GM12878 (cell line): ENCODE measurements at regions of chr1 and their contacts with region 1.

Region 1: DNA sequence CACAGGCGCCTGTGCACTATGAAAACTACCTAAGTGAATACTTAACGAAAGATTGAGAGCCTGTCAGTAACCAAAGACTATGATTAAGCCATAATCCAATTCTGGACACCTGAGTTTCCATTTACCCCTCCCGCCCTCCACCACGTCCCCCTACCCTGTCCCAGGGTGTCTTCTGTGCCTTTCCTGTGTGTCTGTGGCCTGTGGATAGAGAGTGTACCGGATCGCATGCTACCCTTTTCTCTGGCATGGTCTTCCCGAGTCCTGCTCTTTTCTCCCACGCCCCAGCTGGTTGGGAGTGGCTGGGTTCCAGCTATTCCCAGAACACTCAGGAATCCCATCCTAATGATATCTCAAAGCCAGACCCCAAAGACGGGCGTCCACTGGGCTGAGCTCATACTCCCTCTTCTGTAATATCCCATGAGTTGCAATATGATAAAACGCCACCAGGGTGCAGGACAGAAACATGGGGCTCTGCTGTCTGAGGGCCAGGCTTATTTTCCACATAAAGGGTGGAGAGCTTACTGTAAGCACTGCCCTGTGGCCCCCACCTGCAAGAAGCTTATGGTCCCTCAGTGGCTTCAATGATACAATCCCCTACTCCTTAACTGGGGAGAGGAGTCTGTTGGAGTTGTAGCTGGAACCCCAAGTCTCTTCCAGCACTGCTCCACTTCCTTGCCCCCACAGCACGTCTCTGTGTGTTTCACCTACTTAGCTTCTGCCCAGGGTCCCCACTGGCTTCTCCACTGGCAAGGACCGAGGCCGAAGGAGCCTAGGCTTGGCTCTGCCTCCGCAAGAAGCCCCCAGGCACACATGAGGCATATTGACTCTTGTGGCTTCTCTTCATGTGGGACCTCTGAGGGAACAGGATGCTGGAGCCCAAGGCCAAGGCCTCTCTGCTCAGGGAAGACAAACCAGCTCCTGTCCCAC is 17.6 kb upstream of the ALX3 start:
- DNase-seq: no peak
- ATAC-seq: peak; percentile 89
- H3K4me3 ChIP-seq: no peak overlapping the region
- H3K27ac ChIP-seq: no peak overlapping the region
- H3K4me1 ChIP-seq: peaks cover 5% of the 10 kb centered on the region; the same call in 1 of the 2 replicates
- H3K27me3 ChIP-seq: peaks cover 5 to 8% of the 10 kb centered on the region in 2 experiments; a peak in 2 of 4 replicates
- CTCF ChIP-seq: peak; percentile 61 to 74 (median 67)
- EP300 ChIP-seq: no peak
- POLR2A ChIP-seq: no peak
- RAD21 ChIP-seq: peak; percentile 71

Region 2: DNA sequence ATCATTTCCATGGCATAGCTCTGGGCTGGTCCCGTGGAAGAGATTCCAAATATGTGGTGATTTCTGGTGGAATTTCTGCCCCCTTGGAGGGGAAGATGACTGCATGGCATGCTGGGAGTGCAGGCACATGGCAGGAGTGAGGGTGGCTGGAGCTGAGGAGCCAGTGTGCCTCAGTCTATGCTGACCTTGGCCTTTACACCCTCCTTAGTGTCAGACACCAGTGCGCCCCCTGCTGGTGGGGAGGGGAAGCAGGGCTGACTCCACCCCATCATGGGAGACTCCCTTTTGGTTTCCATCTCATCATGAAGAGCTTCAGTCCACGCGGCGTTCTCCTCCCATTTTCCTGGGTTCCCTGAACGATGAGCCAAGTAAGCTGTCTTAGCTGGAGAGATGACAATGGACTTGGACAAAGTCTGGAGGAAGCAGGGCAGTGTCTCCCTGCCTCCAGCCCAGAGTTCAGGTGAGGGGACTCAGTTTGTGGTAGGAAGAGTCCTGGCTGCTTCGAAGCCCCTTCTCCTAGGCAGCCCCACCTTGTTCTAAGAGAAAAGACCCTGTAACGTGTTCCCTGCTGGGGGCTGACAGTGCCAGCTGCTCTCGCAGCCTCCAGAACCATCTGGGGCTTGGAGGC is 27.9 kb before region 1 on chr1:
- CTCF ChIA-PET with region 1: interaction called, 10 read pairs
- POLR2A ChIA-PET with region 1: no interaction called
- RAD21 ChIA-PET with region 1: no interaction called
- SMC1A ChIA-PET with region 1: interaction called, 3 read pairs
- in situ Hi-C with region 1: no loop called
- intact Hi-C with region 1: no loop called
- DNase-seq: no peak
- ATAC-seq: peak; percentile 98
- H3K4me3 ChIP-seq: no peak overlapping the region
- H3K27ac ChIP-seq: no peak overlapping the region
- H3K4me1 ChIP-seq: no peaks in the 10 kb centered on the region
- H3K27me3 ChIP-seq: no peaks in the 10 kb centered on the region
- CTCF ChIP-seq: peak; percentile 86 to 99 (median 94)
- EP300 ChIP-seq: no peak
- POLR2A ChIP-seq: peak; percentile 32; the same call in 1 of the 2 replicates
- RAD21 ChIP-seq: peak; percentile 14; the same call in 1 of the 2 replicates

Region 3: DNA sequence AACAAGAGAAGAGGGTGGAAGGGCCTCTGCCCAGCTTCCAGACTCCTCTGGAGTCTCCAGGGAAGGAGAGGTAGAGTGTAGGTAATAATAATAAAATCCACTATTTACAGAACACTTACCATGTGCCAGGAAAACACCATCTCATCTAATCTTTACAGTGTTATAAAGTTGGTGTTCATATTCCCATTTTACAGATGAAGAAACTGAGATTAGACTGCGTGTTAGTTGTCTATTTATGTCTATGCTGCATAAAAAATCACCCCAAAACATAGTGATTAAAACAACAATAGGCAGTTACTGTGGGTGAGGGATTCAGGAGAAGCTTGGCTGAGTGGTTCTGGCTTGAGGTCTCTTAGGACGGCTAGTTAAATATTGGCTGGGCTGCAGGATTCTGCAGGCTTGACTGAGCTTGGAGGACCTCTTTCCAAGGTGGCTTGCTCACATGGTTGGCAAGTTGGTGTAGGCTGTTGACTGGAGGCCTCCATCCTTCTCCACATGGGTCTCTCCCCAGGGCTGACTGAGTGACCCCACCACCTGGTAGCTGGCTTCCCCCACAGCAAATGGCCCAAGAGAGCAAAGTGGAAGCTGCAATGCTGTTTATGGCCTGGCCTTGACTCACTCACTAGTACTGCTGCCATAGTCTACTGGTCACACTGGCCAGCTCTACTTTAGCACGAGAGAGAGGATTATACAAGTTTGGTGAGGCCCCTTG is 11.1 kb before region 1 on chr1:
- CTCF ChIA-PET with region 1: interaction called, 13 read pairs
- POLR2A ChIA-PET with region 1: no interaction called
- RAD21 ChIA-PET with region 1: no interaction called
- SMC1A ChIA-PET with region 1: interaction called, 4 read pairs
- in situ Hi-C with region 1: no loop called
- intact Hi-C with region 1: no loop called
- DNase-seq: no peak
- ATAC-seq: no peak
- H3K4me3 ChIP-seq: no peak overlapping the region
- H3K27ac ChIP-seq: no peak overlapping the region
- H3K4me1 ChIP-seq: no peaks in the 10 kb centered on the region
- H3K27me3 ChIP-seq: peaks cover 0 to 1% of the 10 kb centered on the region in 2 experiments; a peak in 2 of 4 replicates
- CTCF ChIP-seq: no peak
- EP300 ChIP-seq: no peak
- POLR2A ChIP-seq: no peak
- RAD21 ChIP-seq: no peak

Region 4: DNA sequence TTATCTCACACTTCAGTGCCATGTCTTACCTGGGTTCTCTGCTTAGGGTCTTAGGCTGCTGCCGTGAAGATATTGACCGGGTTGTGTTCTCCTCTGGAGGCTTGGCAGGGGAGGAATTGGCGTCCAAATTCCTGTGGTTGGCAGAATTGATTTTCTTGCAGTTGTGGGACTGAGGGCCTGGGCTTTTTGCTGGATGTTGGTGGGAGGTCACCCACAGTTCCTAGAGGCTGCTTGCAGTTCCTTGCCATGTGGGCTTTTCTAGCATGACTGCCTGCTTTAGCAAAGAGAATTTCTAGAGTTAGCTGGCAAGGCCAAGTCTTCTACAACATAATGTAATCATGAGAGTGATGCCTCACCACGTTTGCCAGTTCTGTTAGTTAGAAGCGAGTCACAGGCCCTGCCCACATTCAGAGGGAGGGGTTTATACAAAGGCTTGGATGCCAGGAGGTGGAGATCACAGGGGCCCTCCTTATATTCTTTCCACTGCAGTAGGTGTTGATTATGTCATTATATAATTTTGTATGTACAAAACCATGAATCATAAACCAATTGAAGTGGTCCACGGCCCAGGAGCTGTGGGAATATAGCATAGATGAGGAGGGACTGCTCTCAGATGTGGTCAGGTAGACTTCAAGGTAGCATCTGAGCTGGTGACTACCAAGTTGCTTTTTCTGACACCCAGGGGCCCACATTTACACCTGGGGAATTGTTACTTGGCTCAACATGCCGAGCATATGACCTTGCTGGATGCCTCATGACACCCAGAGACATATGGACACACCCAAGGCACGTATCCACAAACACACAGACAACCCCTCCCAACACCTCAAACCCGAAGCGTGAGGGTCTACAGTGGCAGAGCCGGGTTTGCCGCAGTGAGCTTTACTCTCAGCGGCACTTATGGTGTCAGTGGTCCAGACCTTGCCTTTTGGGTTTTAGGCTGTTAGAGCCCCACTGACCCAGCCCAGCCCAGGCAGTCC is 30.9 kb after region 1 on chr1:
- CTCF ChIA-PET with region 1: interaction called, 16 read pairs
- POLR2A ChIA-PET with region 1: no interaction called
- RAD21 ChIA-PET with region 1: interaction called, 4 read pairs
- SMC1A ChIA-PET with region 1: interaction called, 3 read pairs
- in situ Hi-C with region 1: no loop called
- intact Hi-C with region 1: no loop called
- DNase-seq: no peak
- ATAC-seq: no peak
- H3K4me3 ChIP-seq: no peak overlapping the region
- H3K27ac ChIP-seq: no peak overlapping the region
- H3K4me1 ChIP-seq: no peaks in the 10 kb centered on the region
- H3K27me3 ChIP-seq: peaks cover 1 to 2% of the 10 kb centered on the region in 2 experiments; a peak in 2 of 4 replicates
- CTCF ChIP-seq: no peak
- EP300 ChIP-seq: no peak
- POLR2A ChIP-seq: no peak
- RAD21 ChIP-seq: no peak